GM12878 (cell line): ENCODE measurements at regions of chr12 and their contacts with region 1.

Region 1: DNA sequence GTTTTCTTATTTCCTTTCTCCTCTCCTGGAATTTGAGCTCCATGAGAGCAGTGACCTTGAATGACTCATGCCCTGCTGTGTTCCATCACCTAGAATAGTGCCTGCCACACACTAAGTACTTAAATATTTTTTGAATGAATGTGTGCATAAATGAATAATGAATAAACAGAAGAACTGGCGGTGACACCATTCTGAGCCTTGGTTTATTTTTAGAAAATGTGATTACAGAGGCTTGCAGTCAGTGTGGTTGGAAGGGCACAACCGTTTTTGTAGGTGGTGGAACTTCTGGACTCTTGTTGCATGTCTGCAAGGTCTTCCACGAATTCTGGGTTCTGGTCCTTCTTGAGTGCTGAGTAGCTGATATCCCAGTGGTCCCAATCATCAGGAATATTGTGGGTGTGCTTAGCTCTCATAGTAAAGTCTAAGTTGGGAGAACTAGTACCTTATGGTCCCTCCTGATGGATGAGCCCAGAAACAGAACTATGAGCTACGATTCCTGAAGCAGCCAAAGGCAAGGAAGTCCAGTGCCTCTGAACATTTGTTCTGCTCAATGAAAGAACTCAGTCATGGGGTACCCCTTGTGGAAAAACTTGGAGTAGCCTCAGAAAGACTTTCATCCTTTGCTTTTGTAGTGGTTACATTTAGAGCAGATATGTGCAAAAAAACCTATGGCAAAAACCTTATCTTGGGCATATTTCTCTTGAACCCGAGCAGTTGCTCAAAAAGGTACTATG is 28.8 kb upstream of the BHLHE41 start:
- DNase-seq: no peak
- ATAC-seq: no peak
- H3K4me3 ChIP-seq: no peak overlapping the region
- H3K27ac ChIP-seq: no peak overlapping the region
- H3K4me1 ChIP-seq: peaks cover 35% of the 10 kb centered on the region
- H3K27me3 ChIP-seq: no peaks in the 10 kb centered on the region
- CTCF ChIP-seq: no peak
- EP300 ChIP-seq: no peak
- POLR2A ChIP-seq: no peak
- RAD21 ChIP-seq: no peak

Region 2: GRCh38 chr12:26164124-26164523 is 10.5 kb after region 1 on chr12:
- CTCF ChIA-PET with region 1: interaction called, 4 read pairs
- POLR2A ChIA-PET with region 1: interaction called, 9 read pairs
- RAD21 ChIA-PET with region 1: interaction called, 6 read pairs
- SMC1A ChIA-PET with region 1: interaction called, 14 read pairs
- in situ Hi-C with region 1: no loop called
- intact Hi-C with region 1: no loop called
- DNase-seq: no peak
- ATAC-seq: no peak
- H3K4me3 ChIP-seq: no peak overlapping the region
- H3K27ac ChIP-seq: no peak overlapping the region
- H3K4me1 ChIP-seq: peaks cover 6% of the 10 kb centered on the region
- H3K27me3 ChIP-seq: no peaks in the 10 kb centered on the region
- CTCF ChIP-seq: no peak
- EP300 ChIP-seq: no peak
- POLR2A ChIP-seq: no peak
- RAD21 ChIP-seq: no peak

Region 3: GRCh38 chr12:26177283-26177682 is 23.7 kb after region 1 on chr12:
- CTCF ChIA-PET with region 1: no interaction called
- POLR2A ChIA-PET with region 1: interaction called, 4 read pairs
- RAD21 ChIA-PET with region 1: interaction called, 10 read pairs
- SMC1A ChIA-PET with region 1: interaction called, 11 read pairs
- in situ Hi-C with region 1: no loop called
- intact Hi-C with region 1: no loop called
- DNase-seq: no peak
- ATAC-seq: peak; percentile 89
- H3K4me3 ChIP-seq: no peak overlapping the region
- H3K27ac ChIP-seq: no peak overlapping the region
- H3K4me1 ChIP-seq: peaks cover 4% of the 10 kb centered on the region
- H3K27me3 ChIP-seq: peaks cover 0 to 8% of the 10 kb centered on the region in 2 experiments; a peak in 3 of 4 replicates
- CTCF ChIP-seq: no peak
- EP300 ChIP-seq: no peak
- POLR2A ChIP-seq: no peak
- RAD21 ChIP-seq: no peak

Region 4: DNA sequence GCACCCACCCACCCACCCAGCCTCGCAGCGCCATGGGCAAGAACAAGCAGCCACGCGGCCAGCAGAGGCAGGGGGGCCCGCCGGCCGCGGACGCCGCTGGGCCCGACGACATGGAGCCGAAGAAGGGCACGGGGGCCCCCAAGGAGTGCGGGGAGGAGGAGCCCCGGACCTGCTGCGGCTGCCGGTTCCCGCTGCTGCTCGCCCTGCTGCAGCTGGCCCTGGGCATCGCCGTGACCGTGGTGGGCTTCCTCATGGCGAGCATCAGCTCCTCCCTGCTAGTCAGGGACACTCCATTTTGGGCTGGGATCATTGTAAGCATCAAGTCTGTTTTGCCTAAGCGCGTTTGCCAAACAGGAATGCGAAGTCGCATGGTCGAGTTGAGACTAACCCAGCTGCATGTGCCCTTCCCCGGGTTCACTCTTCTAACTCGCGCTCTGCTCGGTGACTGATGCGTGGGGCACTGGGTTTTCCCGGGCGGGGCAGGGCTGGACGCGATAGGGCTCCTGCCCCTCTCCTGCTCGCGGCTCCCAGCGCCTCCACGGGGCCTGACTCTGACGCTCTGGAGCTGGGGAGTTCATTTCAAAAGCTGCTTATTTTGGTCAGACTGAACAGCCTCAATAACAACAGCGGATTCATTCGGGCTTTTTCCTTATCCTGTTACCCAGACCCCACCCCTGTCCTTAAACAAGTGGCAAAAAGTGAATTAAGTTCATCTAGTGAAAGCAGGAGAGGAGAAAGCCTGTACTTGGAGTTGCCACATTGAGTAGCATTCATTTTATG is 42.2 kb after region 1 on chr12:
- CTCF ChIA-PET with region 1: no interaction called
- POLR2A ChIA-PET with region 1: no interaction called
- RAD21 ChIA-PET with region 1: interaction called, 4 read pairs
- SMC1A ChIA-PET with region 1: interaction called, 12 read pairs
- in situ Hi-C with region 1: no loop called
- intact Hi-C with region 1: no loop called
- DNase-seq: no peak
- ATAC-seq: peak; percentile 80
- H3K4me3 ChIP-seq: peak overlapping the region; percentile 52; the same call in 1 of the 2 replicates
- H3K27ac ChIP-seq: no peak overlapping the region
- H3K4me1 ChIP-seq: no peaks in the 10 kb centered on the region
- H3K27me3 ChIP-seq: peaks cover 4 to 6% of the 10 kb centered on the region in 2 experiments; a peak in 3 of 4 replicates
- CTCF ChIP-seq: no peak
- EP300 ChIP-seq: no peak
- POLR2A ChIP-seq: no peak
- RAD21 ChIP-seq: no peak

Region 5: GRCh38 chr12:26298785-26299621 is 145.4 kb after region 1 on chr12:
- CTCF ChIA-PET with region 1: interaction called, 6 read pairs
- POLR2A ChIA-PET with region 1: interaction called, 23 read pairs
- RAD21 ChIA-PET with region 1: interaction called, 41 read pairs
- SMC1A ChIA-PET with region 1: interaction called, 56 read pairs
- in situ Hi-C with region 1: no loop called
- intact Hi-C with region 1: loop called (anchors 1 kb)
- DNase-seq: peak; percentile 91
- ATAC-seq: peak; percentile 98
- H3K4me3 ChIP-seq: 0 out of 2 replicates have a peak overlapping the region, but pooled peaks have one; percentile 4
- H3K27ac ChIP-seq: peak overlapping the region; percentile 61; the same call in 1 of the 2 replicates
- H3K4me1 ChIP-seq: peaks cover 20% of the 10 kb centered on the region
- H3K27me3 ChIP-seq: no peaks in the 10 kb centered on the region; a peak in 1 of 4 replicates
- CTCF ChIP-seq: no peak
- EP300 ChIP-seq: peak; percentile 95 to 98
- POLR2A ChIP-seq: no peak
- RAD21 ChIP-seq: 0 out of 2 replicates have a peak, but pooled peaks have one; percentile 24

Region 6: DNA sequence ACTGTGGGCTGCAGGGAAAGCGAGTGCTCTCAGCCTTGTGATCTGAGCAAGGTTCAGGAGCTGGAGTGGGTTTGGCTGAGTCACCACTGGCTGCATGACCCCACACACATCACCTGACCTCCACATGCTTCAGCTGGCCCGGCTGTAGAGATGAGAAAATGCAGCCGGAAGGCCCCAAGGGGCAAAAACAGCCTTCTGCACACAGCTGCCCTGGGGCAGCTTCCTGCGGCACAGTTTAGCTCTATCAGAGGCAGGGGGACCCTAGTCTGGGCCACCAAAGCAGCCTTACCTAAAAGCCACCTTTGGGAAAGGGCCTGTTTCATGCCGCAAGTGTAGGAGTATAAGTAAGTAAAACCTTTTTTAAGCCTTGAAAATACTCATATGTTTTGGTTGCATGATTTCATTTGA is 165.1 kb after region 1 on chr12:
- CTCF ChIA-PET with region 1: interaction called, 3 read pairs
- POLR2A ChIA-PET with region 1: no interaction called
- RAD21 ChIA-PET with region 1: interaction called, 12 read pairs
- SMC1A ChIA-PET with region 1: interaction called, 14 read pairs
- in situ Hi-C with region 1: no loop called
- intact Hi-C with region 1: no loop called
- DNase-seq: no peak
- ATAC-seq: peak; percentile 93
- H3K4me3 ChIP-seq: no peak overlapping the region
- H3K27ac ChIP-seq: no peak overlapping the region
- H3K4me1 ChIP-seq: peaks cover 14% of the 10 kb centered on the region
- H3K27me3 ChIP-seq: no peaks in the 10 kb centered on the region
- CTCF ChIP-seq: no peak
- EP300 ChIP-seq: peak in 1 of 2 experiments; percentile 35; a peak in 1 of 4 replicates
- POLR2A ChIP-seq: no peak
- RAD21 ChIP-seq: no peak